CD4-positive, alpha-beta memory T cell (primary cell): ENCODE measurements at regions of chr6 and their contacts with region 1.

Region 1: GRCh38 chr6:77740380-77740779 is 87.5 kb downstream of the MEI4 start:
- DNase-seq: no peak
- H3K4me3 ChIP-seq: no peak overlapping the region
- H3K4me3 Mint-ChIP-seq: no peak overlapping the region
- H3K27ac ChIP-seq: no peak overlapping the region
- H3K27ac Mint-ChIP-seq: no peak overlapping the region
- H3K4me1 ChIP-seq: no peaks in the 10 kb centered on the region
- H3K4me1 Mint-ChIP-seq: no peaks in the 10 kb centered on the region
- H3K27me3 ChIP-seq: no peaks in the 10 kb centered on the region
- H3K27me3 Mint-ChIP-seq: no peaks in the 10 kb centered on the region

Region 2: DNA sequence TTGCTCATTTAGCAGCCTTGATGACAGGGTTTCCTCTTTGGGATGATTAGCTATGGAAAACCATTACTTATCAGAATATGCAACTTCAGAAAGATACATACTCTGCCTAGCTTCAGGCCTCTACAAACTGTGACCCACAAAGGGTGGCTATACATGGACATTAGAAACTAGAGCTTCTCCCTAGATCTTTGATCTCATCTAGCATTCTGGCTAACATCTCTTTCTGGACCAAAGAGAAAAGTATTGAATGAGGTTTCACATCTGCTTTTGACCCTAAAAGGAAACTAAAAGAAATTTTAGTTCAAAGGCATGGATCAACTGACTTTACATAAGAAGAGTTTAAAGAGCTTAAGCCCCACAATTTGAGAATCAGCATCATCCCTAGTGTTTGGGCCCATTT is 1506.5 kb after region 1 on chr6:
- CTCF ChIA-PET with region 1: no interaction called
- POLR2A ChIA-PET with region 1: no interaction called
- intact Hi-C with region 1: loop called (anchors 5 kb)
- DNase-seq: no peak
- H3K4me3 ChIP-seq: no peak overlapping the region
- H3K4me3 Mint-ChIP-seq: no peak overlapping the region
- H3K27ac ChIP-seq: no peak overlapping the region
- H3K27ac Mint-ChIP-seq: no peak overlapping the region
- H3K4me1 ChIP-seq: no peaks in the 10 kb centered on the region
- H3K4me1 Mint-ChIP-seq: no peaks in the 10 kb centered on the region
- H3K27me3 ChIP-seq: no peaks in the 10 kb centered on the region
- H3K27me3 Mint-ChIP-seq: peaks cover 0 to 4% of the 10 kb centered on the region in 2 donors